ENCODE measurements at regions of chr1 and their contacts with region 1.

Region 1: GRCh38 chr1:97947695-97948094 is 26.9 kb upstream of the DPYD start:
- DNase-seq: no peak
- H3K4me3 ChIP-seq: peak overlapping the region in 19 of 59 donors; percentile 1 to 43 (median 14)
- H3K27ac ChIP-seq: no peak overlapping the region
- H3K27me3 ChIP-seq: no peaks in the 10 kb centered on the region
- CTCF ChIP-seq: no peak

Region 2: GRCh38 chr1:97906567-97907241 is 41.0 kb before region 1 on chr1:
- intact Hi-C with region 1: no loop called
- DNase-seq: peak in 1 of 10 donors; percentile 52
- H3K4me3 ChIP-seq: no peak overlapping the region
- H3K27ac ChIP-seq: peak overlapping the region in 5 of 59 donors; percentile 1 to 23 (median 10)
- H3K27me3 ChIP-seq: no peaks in the 10 kb centered on the region
- CTCF ChIP-seq: no peak

Region 3: DNA sequence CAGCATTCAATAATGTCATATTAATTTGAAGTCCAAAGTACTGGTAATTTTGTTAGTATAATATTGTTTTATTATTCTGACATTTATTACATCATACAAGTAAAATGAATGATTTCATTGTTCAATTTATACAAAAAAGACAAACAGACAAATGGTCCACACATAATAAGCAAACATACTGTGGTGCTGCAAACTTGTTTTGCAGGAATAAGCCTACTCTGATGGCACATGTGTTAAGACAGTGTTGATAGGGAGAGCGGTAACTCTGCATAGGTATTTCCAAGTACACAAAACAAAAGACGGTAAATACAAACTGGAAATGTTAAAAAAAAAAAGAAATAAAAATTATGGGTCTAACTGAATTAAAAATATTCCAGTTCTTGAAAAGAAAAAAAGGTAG is 32.8 kb after region 1 on chr1:
- intact Hi-C with region 1: loop called in 1 of 2 experiments (anchors 5 kb)
- DNase-seq: no peak
- H3K4me3 ChIP-seq: peak overlapping the region in 2 of 59 donors; percentile 2 to 18
- H3K27ac ChIP-seq: peak overlapping the region in 12 of 59 donors; percentile 2 to 56 (median 26)
- H3K27me3 ChIP-seq: no peaks in the 10 kb centered on the region
- CTCF ChIP-seq: no peak